ENCODE measurements at regions of chr2 and their contacts with region 1.

Region 1: GRCh38 chr2:53688020-53688419 is 79.6 kb upstream of the CHAC2 start:
- DNase-seq: no peak
- ATAC-seq: no peak
- H3K4me3 ChIP-seq: no peak overlapping the region
- H3K4me3 Mint-ChIP-seq: no peak overlapping the region
- H3K27ac ChIP-seq: no peak overlapping the region
- H3K27ac Mint-ChIP-seq: no peak overlapping the region
- H3K4me1 ChIP-seq: no peaks in the 10 kb centered on the region
- H3K4me1 Mint-ChIP-seq: peaks cover 21% of the 10 kb centered on the region
- H3K27me3 ChIP-seq: no peaks in the 10 kb centered on the region
- H3K27me3 Mint-ChIP-seq: no peaks in the 10 kb centered on the region
- CTCF ChIP-seq: no peak

Region 2: GRCh38 chr2:53672881-53673522 is 15.0 kb before region 1 on chr2:
- CTCF ChIA-PET with region 1: no interaction called
- POLR2A ChIA-PET with region 1: no interaction called
- intact Hi-C with region 1: no loop called
- DNase-seq: no peak
- ATAC-seq: no peak
- H3K4me3 ChIP-seq: no peak overlapping the region
- H3K4me3 Mint-ChIP-seq: no peak overlapping the region
- H3K27ac ChIP-seq: no peak overlapping the region
- H3K27ac Mint-ChIP-seq: peak overlapping the region; percentile 5
- H3K4me1 ChIP-seq: no peaks in the 10 kb centered on the region
- H3K4me1 Mint-ChIP-seq: no peaks in the 10 kb centered on the region
- H3K27me3 ChIP-seq: no peaks in the 10 kb centered on the region
- H3K27me3 Mint-ChIP-seq: no peaks in the 10 kb centered on the region
- CTCF ChIP-seq: no peak

Region 3: DNA sequence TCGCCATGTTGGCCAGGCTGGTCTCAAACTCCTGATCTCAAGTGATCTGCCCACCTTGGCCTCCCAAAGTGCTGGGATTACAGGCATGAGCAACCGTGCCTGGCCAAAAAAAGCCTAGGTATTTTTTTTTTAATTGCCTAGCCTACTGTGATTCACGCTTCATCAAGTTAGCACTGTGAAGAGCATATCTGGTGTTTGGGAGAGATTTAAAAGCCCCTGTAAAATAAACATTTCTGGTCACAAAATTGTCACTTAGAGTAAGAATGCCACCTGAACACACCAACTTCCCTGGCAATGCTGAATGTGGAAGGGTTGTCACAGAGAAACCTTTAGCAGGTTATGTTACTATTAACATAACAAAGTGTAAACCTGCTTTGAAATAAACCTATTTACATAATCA is 39.9 kb after region 1 on chr2:
- CTCF ChIA-PET with region 1: no interaction called
- POLR2A ChIA-PET with region 1: no interaction called
- intact Hi-C with region 1: loop called in 1 of 2 experiments (anchors 5 kb)
- DNase-seq: no peak
- ATAC-seq: no peak
- H3K4me3 ChIP-seq: no peak overlapping the region
- H3K4me3 Mint-ChIP-seq: no peak overlapping the region
- H3K27ac ChIP-seq: no peak overlapping the region
- H3K27ac Mint-ChIP-seq: no peak overlapping the region
- H3K4me1 ChIP-seq: no peaks in the 10 kb centered on the region
- H3K4me1 Mint-ChIP-seq: peaks cover 14% of the 10 kb centered on the region
- H3K27me3 ChIP-seq: no peaks in the 10 kb centered on the region
- H3K27me3 Mint-ChIP-seq: no peaks in the 10 kb centered on the region
- CTCF ChIP-seq: no peak

Measured in CD8-positive, alpha-beta T cell (primary cell).